Breast epithelium (tissue), 4 donors: ENCODE measurements at regions of chr2 and their contacts with region 1.

Region 1: GRCh38 chr2:151363709-151364108 is 6.3 kb downstream of the TNFAIP6 start:
- DNase-seq: peak in 1 of 2 donors; percentile 76
- H3K4me3 ChIP-seq: peak overlapping the region in 2 of 3 donors; percentile 12 to 37
- H3K27ac ChIP-seq: peak overlapping the region; percentile 51 to 52
- H3K4me1 ChIP-seq: peaks cover 0 to 3% of the 10 kb centered on the region in 2 donors
- H3K27me3 ChIP-seq: no peaks in the 10 kb centered on the region
- CTCF ChIP-seq: no peak
- POLR2A ChIP-seq: no peak

Region 2: DNA sequence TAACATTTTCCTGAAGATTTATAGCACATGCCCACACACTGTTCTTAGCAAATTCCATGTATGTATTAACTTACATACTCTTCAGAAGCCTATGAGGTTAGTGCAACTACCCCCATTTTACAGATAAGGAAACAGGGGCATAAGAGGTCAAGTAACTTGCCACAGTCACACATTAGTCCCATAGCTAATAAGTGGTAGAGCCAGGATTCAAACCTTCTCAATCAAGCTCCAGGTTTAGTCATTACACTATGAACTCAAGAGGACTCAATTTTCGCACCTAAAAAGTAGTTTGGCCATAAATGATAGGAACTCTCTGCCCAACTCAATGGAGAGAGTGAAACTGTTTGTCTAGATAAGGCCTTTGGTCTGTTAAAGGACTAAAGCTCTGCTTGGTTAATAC is 36.3 kb after region 1 on chr2:
- intact Hi-C with region 1: loop called (anchors 2 kb)
- DNase-seq: no peak
- H3K4me3 ChIP-seq: no peak overlapping the region
- H3K27ac ChIP-seq: no peak overlapping the region
- H3K4me1 ChIP-seq: no peaks in the 10 kb centered on the region
- H3K27me3 ChIP-seq: no peaks in the 10 kb centered on the region
- CTCF ChIP-seq: no peak
- POLR2A ChIP-seq: no peak